HEK293 (cell line): ENCODE measurements at regions of chr3 and their contacts with region 1.

Region 1: GRCh38 chr3:17894434-17895060 is 152.1 kb upstream of the TBC1D5 start:
- H3K4me3 ChIP-seq: no peak overlapping the region
- H3K27ac ChIP-seq: no peak overlapping the region
- H3K4me1 ChIP-seq: no peaks in the 10 kb centered on the region
- CTCF ChIP-seq: 0 out of 2 replicates have a peak, but pooled peaks have one; percentile 21

Region 2: GRCh38 chr3:17755836-17756235 is 138.7 kb before region 1 on chr3:
- CTCF ChIA-PET with region 1: no interaction called
- POLR2A ChIA-PET with region 1: no interaction called
- H3K4me3 ChIP-seq: no peak overlapping the region
- H3K27ac ChIP-seq: no peak overlapping the region
- H3K4me1 ChIP-seq: no peaks in the 10 kb centered on the region
- CTCF ChIP-seq: no peak

Region 3: DNA sequence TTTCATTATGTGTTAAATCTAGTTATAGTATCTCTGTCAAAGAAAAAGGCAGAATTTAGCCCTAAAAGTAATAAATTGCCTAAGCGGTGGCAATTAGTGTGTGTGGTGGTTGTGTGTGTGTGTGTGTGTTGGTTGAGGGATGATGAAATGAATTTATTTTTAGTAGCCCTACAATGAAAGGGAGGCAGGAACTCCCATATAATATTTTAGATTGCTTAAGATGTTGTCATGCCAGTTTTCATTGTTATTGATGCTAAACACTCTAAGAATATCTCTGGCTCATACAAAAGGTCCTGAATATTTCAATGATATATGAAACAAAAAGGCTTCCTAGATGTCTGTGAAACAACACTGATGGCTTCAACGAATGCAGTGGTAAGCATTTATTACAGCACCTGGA is 11.6 kb before region 1 on chr3:
- CTCF ChIA-PET with region 1: interaction called, 10 read pairs
- POLR2A ChIA-PET with region 1: no interaction called
- H3K4me3 ChIP-seq: no peak overlapping the region
- H3K27ac ChIP-seq: no peak overlapping the region
- H3K4me1 ChIP-seq: no peaks in the 10 kb centered on the region
- CTCF ChIP-seq: no peak

Region 4: DNA sequence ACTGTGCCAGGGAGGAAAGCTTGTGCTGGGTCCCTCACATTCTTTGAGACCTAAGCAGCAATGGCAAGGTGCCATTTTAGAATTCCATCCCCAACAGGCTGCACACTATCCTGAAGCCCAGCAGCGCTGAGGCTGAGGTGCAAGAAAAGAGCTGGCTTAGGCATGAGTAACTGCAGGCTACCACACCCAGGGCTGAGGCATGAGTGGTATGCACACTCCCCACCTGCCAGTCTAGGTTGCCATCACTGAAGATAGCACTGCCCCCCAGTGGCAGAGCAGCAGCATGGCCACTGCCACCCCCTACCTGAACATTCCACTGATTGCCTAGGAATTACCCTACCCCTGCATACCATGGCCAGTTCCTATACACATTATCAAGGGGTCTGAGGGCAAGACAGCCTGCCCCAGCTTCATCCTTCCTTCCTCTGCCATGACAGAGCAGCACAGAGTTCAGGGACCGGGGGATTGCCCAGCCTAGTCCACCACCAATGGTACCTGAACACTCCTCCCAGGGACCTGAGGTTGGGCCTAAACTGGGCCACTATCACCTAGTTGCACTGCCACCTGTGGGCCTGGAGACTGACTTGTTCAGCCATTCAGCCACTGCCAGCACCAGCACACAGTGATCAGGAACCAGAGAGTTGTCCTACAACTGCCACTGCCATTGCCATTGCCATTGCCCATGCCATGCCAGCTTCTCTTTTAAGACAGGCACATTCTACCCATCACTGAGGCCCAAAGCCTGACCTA is 400.8 kb after region 1 on chr3:
- CTCF ChIA-PET with region 1: interaction called, 17 read pairs
- POLR2A ChIA-PET with region 1: no interaction called
- H3K4me3 ChIP-seq: no peak overlapping the region
- H3K27ac ChIP-seq: no peak overlapping the region
- H3K4me1 ChIP-seq: no peaks in the 10 kb centered on the region
- CTCF ChIP-seq: no peak